AG04450 (cell line): ENCODE measurements at regions of chr2 and their contacts with region 1.

Region 1: GRCh38 chr2:39696838-39697237 is 31.1 kb downstream of the TMEM178A start:
- DNase-seq: peak; percentile 49
- H3K4me3 ChIP-seq: no peak overlapping the region
- H3K27ac ChIP-seq: no peak overlapping the region
- H3K27me3 ChIP-seq: no peaks in the 10 kb centered on the region
- CTCF ChIP-seq: peak; percentile 53

Region 2: GRCh38 chr2:39379643-39380524 is 317.0 kb before region 1 on chr2:
- CTCF ChIA-PET with region 1: interaction called, 17 read pairs
- POLR2A ChIA-PET with region 1: no interaction called
- DNase-seq: peak; percentile 23
- H3K4me3 ChIP-seq: no peak overlapping the region
- H3K27ac ChIP-seq: no peak overlapping the region
- H3K27me3 ChIP-seq: no peaks in the 10 kb centered on the region
- CTCF ChIP-seq: peak; percentile 60

Region 3: GRCh38 chr2:39513641-39514094 is 183.2 kb before region 1 on chr2:
- CTCF ChIA-PET with region 1: interaction called, 28 read pairs
- POLR2A ChIA-PET with region 1: interaction called, 5 read pairs
- DNase-seq: peak; percentile 85
- H3K4me3 ChIP-seq: no peak overlapping the region
- H3K27ac ChIP-seq: peak overlapping the region; percentile 54
- H3K27me3 ChIP-seq: no peaks in the 10 kb centered on the region
- CTCF ChIP-seq: peak; percentile 78

Region 4: DNA sequence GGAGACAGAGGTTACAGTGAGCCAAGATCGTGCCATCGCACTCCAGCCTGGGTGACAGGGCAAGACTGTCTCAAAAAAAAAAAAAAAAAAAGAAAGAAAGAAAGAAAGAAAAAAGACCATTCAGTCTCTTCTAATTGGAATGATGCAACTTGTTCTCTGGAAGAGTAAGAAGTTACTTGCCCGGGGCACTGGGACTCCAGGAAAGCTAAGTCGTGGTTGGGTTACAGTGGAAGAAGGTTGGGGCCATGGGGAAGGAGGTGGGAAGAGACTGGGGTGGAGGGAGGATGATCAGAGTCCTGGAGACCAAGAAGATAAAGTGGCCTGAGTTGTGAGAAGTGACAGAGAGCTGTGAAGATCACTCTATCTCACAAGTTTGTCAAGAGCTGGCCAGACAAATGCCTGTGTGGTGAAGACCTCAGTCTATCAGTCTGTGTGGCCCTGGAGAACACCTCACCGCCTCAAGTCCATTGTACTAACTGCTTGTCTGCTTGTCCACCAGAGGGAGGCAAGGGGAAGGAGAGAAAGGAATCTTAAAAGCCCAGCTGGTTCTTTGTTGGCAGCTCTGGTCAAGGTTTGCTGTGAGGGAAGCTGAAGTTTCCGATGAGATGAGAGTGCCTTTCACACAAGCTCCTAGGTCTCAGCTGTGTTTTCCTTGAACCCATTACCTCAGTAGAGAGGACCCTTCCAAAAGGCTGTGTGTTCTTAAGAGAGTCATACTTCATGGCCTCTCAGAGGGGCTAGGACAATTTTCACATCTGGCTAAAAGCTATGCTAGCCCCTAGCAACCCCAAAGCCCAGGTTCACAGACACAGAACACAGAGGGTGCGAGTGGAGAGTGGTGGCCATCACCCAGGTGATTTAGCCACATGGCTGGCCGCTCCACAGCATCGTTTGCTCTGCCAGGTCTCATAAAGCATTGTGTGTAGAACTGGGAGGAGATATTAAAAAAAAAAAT is 103.1 kb before region 1 on chr2:
- CTCF ChIA-PET with region 1: interaction called, 88 read pairs
- POLR2A ChIA-PET with region 1: no interaction called
- DNase-seq: peak; percentile 73
- H3K4me3 ChIP-seq: no peak overlapping the region
- H3K27ac ChIP-seq: no peak overlapping the region
- H3K27me3 ChIP-seq: no peaks in the 10 kb centered on the region
- CTCF ChIP-seq: peak; percentile 89

Region 5: DNA sequence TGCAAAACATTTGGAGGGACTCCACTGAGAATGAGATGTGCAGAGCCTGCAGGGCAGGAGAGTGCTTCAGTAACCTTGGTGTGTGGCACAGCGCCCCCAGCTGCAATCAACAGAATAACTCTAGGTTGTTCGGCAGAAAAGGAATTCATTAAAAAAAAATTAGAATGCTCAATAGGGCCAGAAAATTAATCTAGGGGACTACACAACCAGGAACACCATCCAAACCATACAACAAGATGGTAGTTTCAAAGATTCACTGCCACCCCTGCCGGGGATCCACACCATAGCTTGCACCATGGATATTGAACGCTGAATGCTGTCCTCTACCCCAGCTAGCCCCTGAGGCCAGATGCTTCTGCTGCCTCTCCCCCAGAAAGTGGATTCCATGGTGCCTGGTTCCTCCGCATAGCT is 32.1 kb after region 1 on chr2:
- CTCF ChIA-PET with region 1: interaction called, 22 read pairs
- POLR2A ChIA-PET with region 1: no interaction called
- DNase-seq: no peak
- H3K4me3 ChIP-seq: no peak overlapping the region
- H3K27ac ChIP-seq: no peak overlapping the region
- H3K27me3 ChIP-seq: no peaks in the 10 kb centered on the region
- CTCF ChIP-seq: peak; percentile 75